Heart left ventricle (tissue), 16 donors: ENCODE measurements at regions of chr6 and their contacts with region 1.

Region 1: GRCh38 chr6:14638906-14639761 is 521.6 kb downstream of the CD83 start:
- DNase-seq: peak; percentile 73 to 81 (median 77)
- ATAC-seq: peak; percentile 90 to 95 (median 93)
- H3K4me3 ChIP-seq: peak overlapping the region in 9 of 12 donors; percentile 24 to 49 (median 37)
- H3K27ac ChIP-seq: peak overlapping the region; percentile 66 to 90 (median 86)
- H3K4me1 ChIP-seq: peaks cover 4 to 50% (median 24%) of the 10 kb centered on the region in 12 donors
- H3K27me3 ChIP-seq: no peaks in the 10 kb centered on the region
- CTCF ChIP-seq: peak in 3 of 12 donors; percentile 7 to 27 (median 15)
- POLR2A ChIP-seq: no peak

Region 2: GRCh38 chr6:14423330-14423729 is 215.8 kb before region 1 on chr6:
- intact Hi-C with region 1: loop called in 3 of 10 experiments (anchors 5 to 10 kb)
- DNase-seq: peak in 4 of 5 donors; percentile 51 to 74 (median 55)
- ATAC-seq: peak; percentile 89 to 97 (median 92)
- H3K4me3 ChIP-seq: no peak overlapping the region
- H3K27ac ChIP-seq: peak overlapping the region in 9 of 12 donors; percentile 29 to 73 (median 51)
- H3K4me1 ChIP-seq: peaks cover 0 to 20% (median 6%) of the 10 kb centered on the region in 12 donors
- H3K27me3 ChIP-seq: no peaks in the 10 kb centered on the region
- CTCF ChIP-seq: no peak
- POLR2A ChIP-seq: no peak

Region 3: GRCh38 chr6:14464055-14464454 is 175.1 kb before region 1 on chr6:
- intact Hi-C with region 1: no loop called
- DNase-seq: no peak
- ATAC-seq: no peak
- H3K4me3 ChIP-seq: no peak overlapping the region
- H3K27ac ChIP-seq: no peak overlapping the region
- H3K4me1 ChIP-seq: no peaks in the 10 kb centered on the region
- H3K27me3 ChIP-seq: no peaks in the 10 kb centered on the region
- CTCF ChIP-seq: peak in 2 of 12 donors; percentile 3 to 5
- POLR2A ChIP-seq: no peak

Region 4: GRCh38 chr6:14665827-14666724 is 26.9 kb after region 1 on chr6:
- intact Hi-C with region 1: no loop called
- DNase-seq: peak in 1 of 5 donors; percentile 33
- ATAC-seq: peak in 3 of 4 donors; percentile 43 to 53 (median 50)
- H3K4me3 ChIP-seq: no peak overlapping the region
- H3K27ac ChIP-seq: no peak overlapping the region
- H3K4me1 ChIP-seq: peaks cover 0 to 30% (median 4%) of the 10 kb centered on the region in 12 donors
- H3K27me3 ChIP-seq: no peaks in the 10 kb centered on the region
- CTCF ChIP-seq: no peak
- POLR2A ChIP-seq: no peak

Region 5: DNA sequence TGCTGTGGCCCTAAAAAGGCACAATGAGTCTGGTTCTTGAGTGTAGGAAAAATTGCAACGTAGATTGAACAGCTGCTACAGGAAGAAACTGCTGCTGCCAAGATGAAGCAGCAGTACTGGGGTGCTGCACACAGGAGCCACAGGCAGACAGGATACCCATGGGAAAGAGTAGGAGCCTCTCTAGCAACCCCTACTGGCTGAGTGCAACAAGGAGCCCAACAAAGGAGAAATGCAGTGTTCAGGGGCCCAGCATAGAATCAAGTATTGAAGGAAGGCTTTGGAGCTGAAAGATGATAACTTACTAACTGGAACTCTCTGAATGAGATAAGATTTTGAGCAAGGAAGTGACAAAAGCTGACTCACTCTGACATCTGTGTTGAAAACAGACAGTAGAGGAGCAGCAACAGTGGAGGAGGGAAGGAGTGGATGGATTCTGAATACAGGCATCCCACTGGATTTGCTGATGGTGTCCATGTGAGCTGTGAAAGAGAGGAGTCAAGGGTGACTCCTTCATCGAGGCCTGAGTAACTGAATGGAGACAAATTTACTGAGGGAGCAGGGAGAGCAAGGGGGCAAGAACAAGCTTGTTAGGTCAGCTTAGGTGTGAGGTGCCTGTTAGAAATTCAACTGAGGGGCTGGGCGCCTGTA is 72.0 kb after region 1 on chr6:
- intact Hi-C with region 1: loop called in 1 of 10 experiments (anchors 5 kb)
- DNase-seq: peak in 3 of 5 donors; percentile 48 to 55 (median 49)
- ATAC-seq: peak in 2 of 4 donors; percentile 35 to 60
- H3K4me3 ChIP-seq: no peak overlapping the region
- H3K27ac ChIP-seq: peak overlapping the region in 4 of 12 donors; percentile 4 to 56 (median 20)
- H3K4me1 ChIP-seq: peaks cover 0 to 52% (median 26%) of the 10 kb centered on the region in 12 donors
- H3K27me3 ChIP-seq: no peaks in the 10 kb centered on the region
- CTCF ChIP-seq: peak in 11 of 12 donors; percentile 24 to 63 (median 45)
- POLR2A ChIP-seq: no peak

Region 6: GRCh38 chr6:14811775-14812428 is 172.8 kb after region 1 on chr6:
- intact Hi-C with region 1: no loop called
- DNase-seq: no peak
- ATAC-seq: peak in 2 of 4 donors; percentile 47 to 70
- H3K4me3 ChIP-seq: no peak overlapping the region
- H3K27ac ChIP-seq: peak overlapping the region in 1 of 12 donors; percentile 5
- H3K4me1 ChIP-seq: peaks cover 0 to 4% (median 0%) of the 10 kb centered on the region in 12 donors
- H3K27me3 ChIP-seq: no peaks in the 10 kb centered on the region
- CTCF ChIP-seq: no peak
- POLR2A ChIP-seq: no peak